HepG2 (cell line): ENCODE measurements at regions of chr4 and their contacts with region 1.

Region 1: DNA sequence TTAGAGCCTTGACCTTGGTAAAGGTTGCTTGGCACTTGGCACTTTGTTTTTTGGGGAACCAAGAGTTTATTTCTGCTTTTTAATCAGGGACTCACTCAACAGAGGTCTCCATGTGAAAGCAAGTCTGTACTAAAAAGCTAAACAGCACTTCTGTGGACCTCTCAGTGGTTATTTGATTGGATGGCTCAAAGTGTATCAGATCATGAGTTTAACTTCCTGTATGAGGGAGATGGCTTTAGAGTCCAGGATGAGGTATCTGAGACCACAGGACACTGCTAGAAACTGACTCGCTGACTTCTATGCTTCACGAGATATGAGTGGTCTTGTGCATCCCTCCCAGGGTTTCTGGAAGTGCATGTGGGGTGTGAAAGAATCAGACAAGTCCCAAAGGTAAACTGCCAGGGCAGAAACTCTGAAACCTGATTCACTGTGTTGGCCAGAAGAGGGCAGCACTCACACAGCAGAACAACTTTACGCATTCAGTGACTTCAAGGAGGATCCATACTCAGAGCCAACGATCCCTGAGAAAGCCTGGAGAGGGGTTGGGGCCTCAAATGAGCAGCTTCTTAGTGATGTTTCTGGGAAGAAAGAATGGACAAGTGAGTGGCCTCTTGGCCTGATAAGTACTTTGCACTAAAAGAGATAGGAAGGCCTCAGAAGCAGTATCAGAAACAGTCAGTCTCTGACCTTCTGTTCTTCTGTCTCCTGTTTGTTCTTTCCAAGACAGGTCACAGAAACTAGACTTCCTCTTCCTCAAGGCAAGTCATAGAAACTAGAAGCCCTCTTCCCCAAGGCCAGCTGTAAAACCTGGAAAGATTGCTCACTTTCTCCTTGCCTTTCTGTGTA is 220.3 kb upstream of the CXCL13 start:
- DNase-seq: peak; percentile 41
- ATAC-seq: peak; percentile 90
- H3K4me3 ChIP-seq: no peak overlapping the region
- H3K27ac ChIP-seq: no peak overlapping the region
- H3K4me1 ChIP-seq: no peaks in the 10 kb centered on the region
- H3K27me3 ChIP-seq: no peaks in the 10 kb centered on the region
- CTCF ChIP-seq: peak; percentile 86
- EP300 ChIP-seq: no peak
- POLR2A ChIP-seq: no peak
- RAD21 ChIP-seq: peak; percentile 52

Region 2: GRCh38 chr4:77433418-77433733 is 48.0 kb after region 1 on chr4:
- CTCF ChIA-PET with region 1: interaction called, 11 read pairs
- POLR2A ChIA-PET with region 1: no interaction called
- in situ Hi-C with region 1: loop called (anchors 5 kb)
- intact Hi-C with region 1: loop called (anchors 1 kb)
- DNase-seq: peak; percentile 53
- ATAC-seq: peak; percentile 86
- H3K4me3 ChIP-seq: no peak overlapping the region
- H3K27ac ChIP-seq: no peak overlapping the region
- H3K4me1 ChIP-seq: no peaks in the 10 kb centered on the region
- H3K27me3 ChIP-seq: no peaks in the 10 kb centered on the region
- CTCF ChIP-seq: peak; percentile 60
- EP300 ChIP-seq: no peak
- POLR2A ChIP-seq: no peak
- RAD21 ChIP-seq: no peak

Region 3: GRCh38 chr4:77473509-77473908 is 88.2 kb after region 1 on chr4:
- CTCF ChIA-PET with region 1: interaction called, 5 read pairs
- POLR2A ChIA-PET with region 1: no interaction called
- in situ Hi-C with region 1: no loop called
- intact Hi-C with region 1: loop called (anchors 2 kb)
- DNase-seq: peak; percentile 18
- ATAC-seq: peak; percentile 76
- H3K4me3 ChIP-seq: no peak overlapping the region
- H3K27ac ChIP-seq: no peak overlapping the region
- H3K4me1 ChIP-seq: no peaks in the 10 kb centered on the region
- H3K27me3 ChIP-seq: no peaks in the 10 kb centered on the region
- CTCF ChIP-seq: peak; percentile 60
- EP300 ChIP-seq: no peak
- POLR2A ChIP-seq: no peak
- RAD21 ChIP-seq: no peak

Region 4: DNA sequence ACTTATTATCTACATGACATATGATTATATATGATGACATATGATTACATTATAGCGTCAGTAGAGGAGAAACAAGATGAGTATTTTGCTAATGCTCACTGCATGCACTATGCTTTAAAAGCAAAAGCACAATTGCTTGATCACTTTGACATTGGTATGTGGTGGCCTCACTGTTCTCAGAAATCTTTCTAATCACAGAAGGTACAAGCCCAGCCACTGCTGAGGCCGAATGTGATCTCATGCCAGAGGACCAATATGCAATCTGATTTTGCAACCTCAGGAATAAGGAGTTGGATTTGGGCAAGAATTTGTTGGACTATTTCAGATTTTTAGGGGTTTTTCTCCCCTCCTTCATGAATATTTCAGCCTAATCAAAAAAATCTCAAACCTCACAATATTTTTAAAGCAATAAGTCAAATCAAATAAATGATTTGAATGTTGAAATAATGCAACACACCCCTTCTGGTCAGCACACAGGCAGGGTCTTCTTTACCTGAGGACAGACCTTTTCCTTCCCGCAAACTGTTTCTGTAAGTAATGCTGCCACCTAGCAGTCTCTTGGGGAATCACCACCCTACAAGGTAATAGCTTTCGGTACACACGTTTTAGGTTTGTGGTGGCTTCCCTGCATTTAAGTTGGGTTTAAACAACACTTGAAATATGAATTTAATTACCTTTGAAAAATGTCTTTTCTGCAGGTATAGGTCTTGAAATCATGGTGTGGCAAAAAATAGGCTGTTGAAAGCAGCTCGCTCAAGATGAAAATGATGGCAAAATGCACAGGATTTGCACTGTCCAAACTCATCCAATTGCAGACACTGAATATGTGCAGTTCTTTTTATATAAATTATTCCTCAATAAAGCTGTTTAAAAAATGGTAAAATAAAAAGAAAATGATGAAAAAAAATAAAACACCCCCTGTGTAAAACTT is 215.4 kb after region 1 on chr4:
- CTCF ChIA-PET with region 1: interaction called, 11 read pairs
- POLR2A ChIA-PET with region 1: no interaction called
- in situ Hi-C with region 1: loop called (anchors 10 kb)
- intact Hi-C with region 1: loop called (anchors 1 kb)
- DNase-seq: peak; percentile 28
- ATAC-seq: peak; percentile 83
- H3K4me3 ChIP-seq: no peak overlapping the region
- H3K27ac ChIP-seq: no peak overlapping the region
- H3K4me1 ChIP-seq: peaks cover 9% of the 10 kb centered on the region; the same call in 1 of the 2 replicates
- H3K27me3 ChIP-seq: peaks cover 0 to 3% of the 10 kb centered on the region in 2 experiments; a peak in 1 of 5 replicates
- CTCF ChIP-seq: peak; percentile 79
- EP300 ChIP-seq: no peak
- POLR2A ChIP-seq: no peak
- RAD21 ChIP-seq: no peak

Region 5: GRCh38 chr4:77618383-77619122 is 233.2 kb after region 1 on chr4:
- CTCF ChIA-PET with region 1: no interaction called
- POLR2A ChIA-PET with region 1: no interaction called
- in situ Hi-C with region 1: no loop called
- intact Hi-C with region 1: loop called (anchors 5 kb)
- DNase-seq: peak; percentile 40
- ATAC-seq: peak; percentile 97
- H3K4me3 ChIP-seq: no peak overlapping the region
- H3K27ac ChIP-seq: no peak overlapping the region
- H3K4me1 ChIP-seq: no peaks in the 10 kb centered on the region
- H3K27me3 ChIP-seq: peaks cover 0 to 3% of the 10 kb centered on the region in 2 experiments; a peak in 1 of 5 replicates
- CTCF ChIP-seq: peak; percentile 86
- EP300 ChIP-seq: no peak
- POLR2A ChIP-seq: no peak
- RAD21 ChIP-seq: 0 out of 2 replicates have a peak, but pooled peaks have one; percentile 27

Region 6: DNA sequence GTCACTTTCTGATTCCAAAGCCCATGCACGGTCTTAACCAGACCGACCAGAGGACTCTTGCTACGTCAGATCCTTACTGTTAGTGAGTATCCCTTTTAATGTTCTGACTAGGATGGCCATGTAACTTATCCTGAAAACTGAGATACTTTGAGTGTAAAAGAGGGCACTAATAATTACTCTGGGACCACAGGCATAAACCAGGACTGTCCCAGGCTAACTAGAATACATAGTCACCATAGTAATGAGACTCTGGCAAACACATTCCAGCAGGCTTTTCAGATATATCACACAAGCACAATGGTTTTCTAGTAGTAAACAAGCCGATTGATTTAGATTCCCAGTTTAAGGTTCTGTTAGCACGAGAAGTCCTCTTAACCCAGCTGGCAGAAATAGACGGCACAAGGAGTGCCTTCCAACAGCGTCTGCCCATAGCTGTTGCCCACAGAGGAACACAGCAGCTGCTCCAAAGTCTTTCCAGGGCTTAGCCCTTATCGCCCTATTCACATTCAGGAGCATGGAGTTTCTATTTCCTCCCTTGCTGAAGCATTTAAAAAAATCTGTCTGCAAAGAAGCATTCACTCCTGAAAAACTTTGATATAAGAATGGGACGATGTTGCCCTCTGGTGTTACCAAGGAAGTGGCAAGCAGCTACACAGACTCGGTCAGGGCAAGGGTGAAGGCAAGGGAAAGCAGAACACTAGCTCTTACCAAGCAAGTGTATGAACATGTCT is 312.7 kb after region 1 on chr4:
- CTCF ChIA-PET with region 1: no interaction called
- POLR2A ChIA-PET with region 1: no interaction called
- in situ Hi-C with region 1: no loop called
- intact Hi-C with region 1: loop called (anchors 10 kb)
- DNase-seq: peak; percentile 34
- ATAC-seq: peak; percentile 61
- H3K4me3 ChIP-seq: no peak overlapping the region
- H3K27ac ChIP-seq: no peak overlapping the region
- H3K4me1 ChIP-seq: peaks cover 53% of the 10 kb centered on the region
- H3K27me3 ChIP-seq: no peaks in the 10 kb centered on the region
- CTCF ChIP-seq: peak; percentile 61
- EP300 ChIP-seq: no peak
- POLR2A ChIP-seq: no peak
- RAD21 ChIP-seq: no peak